CD4-positive, alpha-beta T cell (primary cell): ENCODE measurements at regions of chr11 and their contacts with region 1.

Region 1: DNA sequence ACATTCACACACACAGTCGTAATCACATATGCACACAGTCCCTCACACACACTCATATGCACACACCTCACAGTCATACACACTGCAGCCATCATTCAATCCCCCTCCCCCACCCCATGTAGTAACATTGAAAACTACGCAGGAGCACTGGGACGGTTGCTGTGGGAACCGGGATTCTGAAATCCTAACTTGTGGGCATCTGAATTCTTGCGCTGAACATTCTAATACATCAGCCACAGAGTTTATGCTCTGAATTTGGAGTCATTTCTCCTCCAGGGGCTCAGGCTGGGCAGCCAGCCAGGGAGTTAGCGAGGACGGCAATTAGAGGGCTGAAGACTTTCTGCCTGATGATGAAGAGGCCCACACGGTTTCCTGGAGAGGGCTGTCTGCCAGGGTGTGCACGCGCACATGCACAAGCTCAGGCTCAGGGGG is 32.7 kb downstream of the CD6 start:
- DNase-seq: peak in 11 of 14 experiments; percentile 40 to 73 (median 55)
- ATAC-seq: peak; percentile 59
- H3K4me3 ChIP-seq: peak overlapping the region; percentile 30
- H3K4me3 Mint-ChIP-seq: peak overlapping the region; percentile 86
- H3K27ac ChIP-seq: peak overlapping the region; percentile 63 to 71
- H3K27ac Mint-ChIP-seq: peak overlapping the region; percentile 95
- H3K4me1 ChIP-seq: peaks cover 89% of the 10 kb centered on the region
- H3K4me1 Mint-ChIP-seq: peaks cover 92% of the 10 kb centered on the region
- H3K27me3 ChIP-seq: no peaks in the 10 kb centered on the region
- H3K27me3 Mint-ChIP-seq: no peaks in the 10 kb centered on the region
- CTCF ChIP-seq: no peak

Region 2: DNA sequence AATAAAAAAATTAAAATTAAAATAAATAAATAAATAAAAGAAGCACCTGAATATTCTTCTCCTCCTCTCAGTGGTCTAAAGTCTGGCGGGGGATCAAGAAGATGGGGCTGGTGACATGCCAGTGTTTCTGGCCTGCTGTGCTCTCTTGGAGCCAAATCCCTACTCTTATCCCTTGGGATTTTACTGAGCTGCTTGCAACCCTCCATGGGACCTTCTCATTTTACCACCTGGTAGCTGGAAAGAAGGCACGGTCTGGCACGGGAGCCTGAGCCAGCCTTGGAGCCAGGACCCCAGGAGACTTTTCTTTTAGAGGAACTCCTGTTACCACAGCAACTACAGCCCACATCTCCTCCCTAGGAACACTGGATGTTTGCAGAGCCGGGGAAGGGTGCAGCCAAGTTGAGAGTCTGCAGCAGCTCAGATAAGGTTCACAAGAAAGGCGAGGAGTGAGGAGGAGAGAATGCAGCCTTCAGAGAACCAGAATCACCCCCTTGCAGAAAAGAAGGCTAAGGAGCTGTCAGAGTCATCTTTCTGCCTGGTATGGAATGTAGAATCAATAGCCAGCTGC is 11.3 kb before region 1 on chr11:
- CTCF ChIA-PET with region 1: interaction called, 4 read pairs
- POLR2A ChIA-PET with region 1: interaction called, 47 read pairs
- intact Hi-C with region 1: loop called in 1 of 2 experiments (anchors 2 kb)
- DNase-seq: peak in 1 of 14 experiments; percentile 15
- ATAC-seq: no peak
- H3K4me3 ChIP-seq: no peak overlapping the region
- H3K4me3 Mint-ChIP-seq: peak overlapping the region; percentile 78
- H3K27ac ChIP-seq: peak overlapping the region; percentile 22 to 61
- H3K27ac Mint-ChIP-seq: peak overlapping the region; percentile 87
- H3K4me1 ChIP-seq: peaks cover 89% of the 10 kb centered on the region
- H3K4me1 Mint-ChIP-seq: peaks cover 83% of the 10 kb centered on the region
- H3K27me3 ChIP-seq: no peaks in the 10 kb centered on the region
- H3K27me3 Mint-ChIP-seq: no peaks in the 10 kb centered on the region
- CTCF ChIP-seq: no peak